Transverse colon (tissue), 4 donors: ENCODE measurements at regions of chr3 and their contacts with region 1.

Region 1: GRCh38 chr3:139319428-139320402 is 24.1 kb upstream of the MRPS22 start:
- DNase-seq: no peak
- H3K4me3 ChIP-seq: no peak overlapping the region
- H3K27ac ChIP-seq: no peak overlapping the region
- H3K4me1 ChIP-seq: no peaks in the 10 kb centered on the region
- H3K27me3 ChIP-seq: peaks cover 22% of the 10 kb centered on the region
- CTCF ChIP-seq: no peak
- EP300 ChIP-seq: no peak
- POLR2A ChIP-seq: no peak

Region 2: DNA sequence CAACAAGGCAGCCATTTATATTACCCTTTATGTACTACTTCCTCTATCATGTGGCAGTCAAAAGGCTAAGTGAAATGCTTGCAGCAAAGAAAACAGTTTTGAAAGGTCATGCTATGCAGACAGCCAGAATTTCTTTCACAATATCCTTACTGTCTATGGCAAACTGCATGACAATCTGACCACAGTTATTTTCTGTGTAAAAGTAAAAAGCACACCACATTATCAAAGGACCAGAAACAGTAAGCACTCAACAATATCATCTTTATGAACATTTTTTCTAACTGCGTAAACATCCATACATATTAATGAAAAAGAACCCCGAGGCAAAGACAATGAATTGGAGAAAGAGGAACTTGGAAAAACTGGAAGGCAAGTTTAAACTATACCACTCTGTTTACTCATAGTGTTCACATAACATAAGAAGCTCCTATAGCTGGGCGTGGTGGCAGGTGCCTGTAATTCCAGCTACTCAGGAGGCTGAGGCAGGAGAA is 532.9 kb before region 1 on chr3:
- in situ Hi-C with region 1: no loop called
- intact Hi-C with region 1: no loop called
- DNase-seq: no peak
- H3K4me3 ChIP-seq: no peak overlapping the region
- H3K27ac ChIP-seq: peak overlapping the region in 3 of 4 donors; percentile 2 to 35 (median 27)
- H3K4me1 ChIP-seq: peaks cover 0 to 3% (median 0%) of the 10 kb centered on the region in 4 donors
- H3K27me3 ChIP-seq: no peaks in the 10 kb centered on the region
- CTCF ChIP-seq: no peak
- EP300 ChIP-seq: no peak
- POLR2A ChIP-seq: no peak

Region 3: GRCh38 chr3:139111392-139112229 is 208.1 kb before region 1 on chr3:
- in situ Hi-C with region 1: loop called (anchors 10 to 25 kb)
- intact Hi-C with region 1: no loop called
- DNase-seq: peak; percentile 74
- H3K4me3 ChIP-seq: no peak overlapping the region
- H3K27ac ChIP-seq: no peak overlapping the region
- H3K4me1 ChIP-seq: peaks cover 0 to 4% (median 2%) of the 10 kb centered on the region in 4 donors
- H3K27me3 ChIP-seq: no peaks in the 10 kb centered on the region
- CTCF ChIP-seq: peak; percentile 64 to 73 (median 67)
- EP300 ChIP-seq: no peak
- POLR2A ChIP-seq: no peak

Region 4: DNA sequence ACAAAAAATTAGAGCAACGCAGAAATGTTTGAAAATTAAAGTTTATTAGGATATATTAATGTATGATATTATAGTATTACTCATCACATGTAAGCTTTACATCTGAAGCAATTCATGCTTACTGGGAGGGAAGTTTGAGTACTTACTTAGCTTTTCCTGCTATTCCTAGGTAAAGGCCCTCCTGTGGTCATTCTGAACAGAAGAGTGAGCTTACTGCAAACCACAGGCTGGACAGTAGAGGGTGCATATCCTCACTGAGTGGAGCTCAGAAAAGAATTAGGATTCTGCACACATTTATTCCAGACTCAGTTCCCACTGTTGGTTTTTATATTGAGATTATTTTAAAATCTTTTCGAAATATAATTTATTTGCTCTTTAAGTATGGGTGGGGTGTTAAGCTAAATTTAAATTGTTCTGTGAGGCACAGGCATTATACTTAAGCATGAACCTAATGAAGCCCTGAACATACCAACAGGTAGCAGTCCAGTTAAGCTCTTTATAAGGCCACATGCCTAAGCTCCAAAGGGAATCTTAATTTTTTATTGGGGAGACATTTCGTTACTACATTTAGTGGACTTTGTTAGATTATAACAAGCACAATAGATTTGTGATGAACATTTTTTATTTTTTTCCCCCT is 34.3 kb after region 1 on chr3:
- in situ Hi-C with region 1: no loop called
- intact Hi-C with region 1: no loop called
- DNase-seq: no peak
- H3K4me3 ChIP-seq: no peak overlapping the region
- H3K27ac ChIP-seq: no peak overlapping the region
- H3K4me1 ChIP-seq: no peaks in the 10 kb centered on the region
- H3K27me3 ChIP-seq: no peaks in the 10 kb centered on the region
- CTCF ChIP-seq: peak; percentile 23 to 54 (median 47)
- EP300 ChIP-seq: no peak
- POLR2A ChIP-seq: no peak